ENCODE measurements at regions of chr13 and their contacts with region 1.

Region 1: DNA sequence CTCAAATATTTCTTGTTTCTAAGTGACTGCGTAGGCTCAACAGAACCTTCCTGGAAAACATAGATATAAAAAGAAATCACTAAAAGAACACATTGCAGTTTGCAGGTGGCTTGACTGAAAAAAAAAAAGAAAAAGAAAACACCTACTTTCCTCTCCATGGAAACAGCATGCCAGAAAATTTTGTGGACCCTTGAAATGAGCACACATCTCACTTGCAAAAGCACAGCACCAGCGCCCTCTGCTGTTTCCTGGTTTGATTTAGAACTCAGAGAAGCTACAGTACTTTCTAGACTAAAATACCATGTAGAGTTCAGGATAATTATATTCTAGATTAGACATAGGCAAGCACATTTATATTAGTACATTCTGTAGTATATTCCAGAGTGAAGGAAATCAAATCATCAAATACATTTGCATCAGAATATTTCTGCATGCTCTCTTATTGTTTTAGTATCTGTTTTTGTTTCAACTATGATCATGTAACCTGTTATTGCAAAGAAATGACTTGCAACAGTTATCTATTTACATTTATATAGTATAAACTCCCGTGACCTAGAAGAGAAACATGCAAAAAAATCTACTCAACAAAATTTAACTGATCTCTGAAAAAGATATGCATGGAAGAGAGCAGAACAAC is 22.3 kb upstream of the XPO4 start:
- DNase-seq: peak; percentile 93
- H3K4me3 ChIP-seq: no peak overlapping the region
- H3K27ac ChIP-seq: no peak overlapping the region
- H3K4me1 ChIP-seq: no peaks in the 10 kb centered on the region
- H3K27me3 ChIP-seq: no peaks in the 10 kb centered on the region
- CTCF ChIP-seq: peak; percentile 19 to 66 (median 58)
- POLR2A ChIP-seq: no peak

Region 2: DNA sequence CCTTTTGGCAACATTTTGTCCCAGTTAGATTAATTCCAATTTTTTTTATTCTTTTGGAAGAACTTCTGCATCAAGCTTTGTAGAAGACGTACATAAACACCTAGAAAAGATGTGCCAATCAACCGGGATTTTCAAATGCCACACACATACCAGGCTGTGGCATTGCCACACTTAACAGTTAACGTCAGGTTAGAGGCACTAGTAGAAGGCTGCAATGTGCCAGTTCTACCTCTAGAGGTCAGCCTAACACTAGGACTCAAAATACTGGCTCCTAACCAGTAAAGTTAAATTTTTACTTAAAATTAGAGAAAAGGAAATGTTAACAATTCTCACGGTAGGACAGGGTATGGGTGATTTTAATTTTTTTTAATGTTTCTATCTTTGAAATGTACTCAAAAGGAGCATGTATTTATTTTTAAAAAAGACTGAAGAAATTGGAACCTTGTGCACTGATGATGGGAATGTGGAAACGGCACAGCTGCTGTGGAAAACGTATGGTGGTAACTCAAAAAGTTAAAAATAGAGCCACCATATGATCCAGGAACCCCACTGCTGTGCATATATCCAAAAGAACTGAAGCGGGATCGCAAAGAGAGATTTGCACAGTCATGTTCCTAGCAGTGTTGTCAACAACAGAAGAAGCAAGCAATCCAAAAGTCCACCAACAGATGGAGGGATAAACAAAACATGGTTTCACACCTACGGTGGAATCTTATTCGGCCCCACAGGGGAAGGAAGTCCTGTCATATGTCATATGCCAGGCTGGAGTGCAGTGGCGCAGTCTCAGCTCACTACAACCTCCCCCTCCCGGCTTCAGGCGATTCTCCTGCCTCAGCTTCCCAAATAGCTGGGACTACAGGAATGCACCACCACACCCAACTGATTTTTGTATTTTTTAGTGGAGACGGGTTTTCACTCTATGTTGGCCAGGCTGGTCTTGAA is 429.5 kb before region 1 on chr13:
- intact Hi-C with region 1: loop called (anchors 10 kb)
- DNase-seq: peak; percentile 85
- H3K4me3 ChIP-seq: no peak overlapping the region
- H3K27ac ChIP-seq: no peak overlapping the region
- H3K4me1 ChIP-seq: no peaks in the 10 kb centered on the region
- H3K27me3 ChIP-seq: no peaks in the 10 kb centered on the region
- CTCF ChIP-seq: peak; percentile 81 to 88 (median 86)
- POLR2A ChIP-seq: no peak

Region 3: DNA sequence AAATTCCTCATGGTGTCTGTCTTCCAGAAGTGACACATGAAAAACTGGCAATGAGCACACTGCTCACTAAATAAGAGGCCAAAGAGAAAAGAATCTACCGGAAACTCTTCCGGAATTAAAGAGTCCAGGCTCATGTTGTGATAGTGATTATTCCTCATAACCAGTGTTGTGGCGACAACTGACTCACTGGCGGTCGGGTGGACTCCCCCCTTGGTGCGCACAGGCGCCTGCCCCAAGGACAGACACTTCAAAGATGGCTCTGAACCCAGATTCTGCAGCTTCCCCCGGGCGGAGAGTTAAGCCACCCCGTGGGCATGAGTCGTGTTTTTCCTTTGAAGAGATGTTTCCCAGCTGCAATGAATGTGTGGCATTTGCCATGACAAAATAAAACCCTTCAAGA is 211.1 kb before region 1 on chr13:
- intact Hi-C with region 1: loop called (anchors 10 kb)
- DNase-seq: no peak
- H3K4me3 ChIP-seq: no peak overlapping the region
- H3K27ac ChIP-seq: peak overlapping the region in 1 of 2 donors; percentile 78
- H3K4me1 ChIP-seq: peaks cover 11% of the 10 kb centered on the region
- H3K27me3 ChIP-seq: no peaks in the 10 kb centered on the region
- CTCF ChIP-seq: no peak
- POLR2A ChIP-seq: no peak

Measured in testis (tissue), 5 donors.